ENCODE measurements at regions of chr4 and their contacts with region 1.

Region 1: GRCh38 chr4:150242820-150243458 is 164.7 kb downstream of the DCLK2 start:
- DNase-seq: peak; percentile 67
- H3K4me3 ChIP-seq: no peak overlapping the region
- H3K27ac ChIP-seq: no peak overlapping the region
- H3K4me1 ChIP-seq: peaks cover 8% of the 10 kb centered on the region
- H3K27me3 ChIP-seq: no peaks in the 10 kb centered on the region
- CTCF ChIP-seq: peak; percentile 87 to 89
- POLR2A ChIP-seq: no peak

Region 2: DNA sequence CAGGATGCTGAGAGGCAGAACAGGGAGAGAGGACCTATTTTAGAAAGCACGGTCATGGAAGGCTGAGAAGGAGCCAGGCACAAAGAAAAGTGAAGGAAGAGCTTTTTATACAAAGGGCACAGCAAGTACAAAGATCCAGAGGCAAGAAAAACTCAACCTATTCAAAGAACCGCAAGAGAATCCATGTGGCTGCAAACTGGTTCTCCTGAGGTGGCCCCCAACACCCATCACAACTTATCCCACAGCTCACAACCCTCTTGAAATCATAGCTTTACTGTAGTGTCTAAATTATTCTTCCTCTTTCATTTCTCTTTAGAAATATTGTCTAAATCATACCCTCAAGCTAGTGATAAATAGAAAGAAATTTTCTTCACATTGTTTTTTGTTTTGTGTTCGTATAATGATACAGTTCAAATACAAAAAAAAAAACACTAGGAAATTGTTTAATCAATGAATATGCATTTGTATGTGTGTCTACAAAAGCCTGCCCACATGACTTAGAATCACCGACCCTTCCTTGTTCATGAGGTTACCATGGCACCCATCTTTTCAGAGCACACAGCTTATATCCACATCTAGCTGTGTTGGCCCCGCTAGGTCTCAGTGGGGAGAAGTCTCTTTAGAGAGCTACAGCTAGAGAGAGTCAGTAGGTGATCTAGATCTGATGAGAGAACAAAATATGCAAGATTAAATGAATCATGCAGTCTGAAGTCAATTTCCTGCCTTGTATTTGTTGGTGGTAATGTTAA is 291.6 kb before region 1 on chr4:
- CTCF ChIA-PET with region 1: no interaction called
- POLR2A ChIA-PET with region 1: no interaction called
- dilution Hi-C with region 1: no loop called
- intact Hi-C with region 1: no loop called
- DNase-seq: no peak
- H3K4me3 ChIP-seq: no peak overlapping the region
- H3K27ac ChIP-seq: no peak overlapping the region
- H3K4me1 ChIP-seq: no peaks in the 10 kb centered on the region
- H3K27me3 ChIP-seq: peaks cover 0 to 2% of the 10 kb centered on the region in 2 experiments
- CTCF ChIP-seq: no peak
- POLR2A ChIP-seq: no peak

Region 3: GRCh38 chr4:149980941-149981340 is 262.0 kb before region 1 on chr4:
- CTCF ChIA-PET with region 1: interaction called, 10 read pairs
- POLR2A ChIA-PET with region 1: no interaction called
- dilution Hi-C with region 1: no loop called
- intact Hi-C with region 1: loop called (anchors 1 kb)
- DNase-seq: peak; percentile 75
- H3K4me3 ChIP-seq: no peak overlapping the region
- H3K27ac ChIP-seq: no peak overlapping the region
- H3K4me1 ChIP-seq: no peaks in the 10 kb centered on the region
- H3K27me3 ChIP-seq: no peaks in the 10 kb centered on the region
- CTCF ChIP-seq: peak; percentile 55 to 71
- POLR2A ChIP-seq: no peak

Region 4: GRCh38 chr4:150010525-150011126 is 232.3 kb before region 1 on chr4:
- CTCF ChIA-PET with region 1: interaction called, 133 read pairs
- POLR2A ChIA-PET with region 1: no interaction called
- dilution Hi-C with region 1: no loop called
- intact Hi-C with region 1: loop called (anchors 1 kb)
- DNase-seq: peak; percentile 69
- H3K4me3 ChIP-seq: no peak overlapping the region
- H3K27ac ChIP-seq: no peak overlapping the region
- H3K4me1 ChIP-seq: no peaks in the 10 kb centered on the region
- H3K27me3 ChIP-seq: no peaks in the 10 kb centered on the region
- CTCF ChIP-seq: peak; percentile 42 to 49
- POLR2A ChIP-seq: no peak

Region 5: DNA sequence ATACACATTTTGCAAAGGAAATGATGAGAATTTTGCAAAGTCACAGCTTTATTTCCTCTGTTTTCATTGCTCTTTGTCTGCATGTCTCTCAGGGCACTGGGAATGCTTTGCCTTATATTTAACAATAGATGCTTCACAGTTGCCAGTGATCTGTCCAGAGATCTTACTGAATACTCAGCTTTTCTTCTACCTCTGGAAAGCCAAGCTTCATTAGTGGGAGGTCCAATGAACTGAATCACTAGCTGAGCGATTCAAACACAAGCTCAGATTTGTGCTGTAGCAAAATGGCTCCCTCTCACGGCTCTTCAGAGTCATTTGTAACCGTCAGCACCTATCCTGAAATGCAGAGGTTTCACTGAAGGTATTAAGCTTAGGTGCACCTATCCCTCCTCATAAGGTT is 25.7 kb before region 1 on chr4:
- CTCF ChIA-PET with region 1: interaction called, 100 read pairs
- POLR2A ChIA-PET with region 1: no interaction called
- dilution Hi-C with region 1: no loop called
- intact Hi-C with region 1: no loop called
- DNase-seq: peak; percentile 45
- H3K4me3 ChIP-seq: no peak overlapping the region
- H3K27ac ChIP-seq: no peak overlapping the region
- H3K4me1 ChIP-seq: no peaks in the 10 kb centered on the region
- H3K27me3 ChIP-seq: no peaks in the 10 kb centered on the region
- CTCF ChIP-seq: peak in 1 of 2 donors; percentile 5
- POLR2A ChIP-seq: no peak

Region 6: GRCh38 chr4:150280081-150280895 is 37.3 kb after region 1 on chr4:
- CTCF ChIA-PET with region 1: interaction called, 11 read pairs
- POLR2A ChIA-PET with region 1: no interaction called
- dilution Hi-C with region 1: no loop called
- intact Hi-C with region 1: no loop called
- DNase-seq: peak; percentile 40
- H3K4me3 ChIP-seq: no peak overlapping the region
- H3K27ac ChIP-seq: no peak overlapping the region
- H3K4me1 ChIP-seq: peaks cover 6% of the 10 kb centered on the region
- H3K27me3 ChIP-seq: no peaks in the 10 kb centered on the region
- CTCF ChIP-seq: no peak
- POLR2A ChIP-seq: no peak

Measured in endothelial cell of umbilical vein (primary cell).